CD8-positive, alpha-beta T cell (primary cell): ENCODE measurements at regions of chr15 and their contacts with region 1.

Region 1: DNA sequence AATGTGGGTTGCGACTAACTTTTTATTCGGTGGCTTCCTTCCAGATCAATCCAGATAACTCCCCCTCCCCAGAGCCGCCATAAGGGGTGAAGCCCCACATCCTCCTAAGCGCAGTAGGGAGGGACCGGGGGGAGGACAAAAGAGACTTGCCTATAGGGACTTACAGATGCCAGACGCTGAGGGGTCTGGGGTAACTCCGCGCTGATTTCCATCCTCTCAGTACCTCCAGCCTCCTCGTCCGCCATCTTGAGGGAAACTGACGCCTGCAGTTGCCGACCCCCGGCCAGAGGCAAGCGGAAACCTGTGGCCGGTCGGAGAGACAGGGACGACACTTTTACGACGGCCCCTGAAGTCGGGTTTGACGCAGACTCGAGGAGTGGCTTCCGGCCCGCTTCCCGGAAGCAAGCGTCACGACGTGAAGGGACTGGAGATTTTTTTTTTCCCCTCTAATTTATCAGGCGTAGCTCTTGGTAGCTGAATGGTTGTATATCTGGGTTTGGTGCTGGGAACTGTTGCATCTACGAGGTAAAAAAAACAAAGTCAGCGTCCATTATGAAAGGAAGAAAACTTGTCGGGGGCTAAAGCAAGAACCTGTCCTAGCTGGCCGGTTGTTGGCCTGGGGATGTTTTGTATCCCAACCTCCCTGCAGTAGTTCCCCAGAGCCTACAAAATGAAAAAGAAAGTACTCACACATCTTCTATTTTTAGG is at the start of gene UBR1:
- DNase-seq: peak; percentile 71 to 97 (median 88)
- ATAC-seq: peak; percentile 84
- H3K4me3 ChIP-seq: peak within 1 kb of the TSS; percentile 72 to 86
- H3K4me3 Mint-ChIP-seq: peak within 1 kb of the TSS; percentile 89
- H3K27ac ChIP-seq: peak within 1 kb of the TSS; percentile 87 to 96
- H3K27ac Mint-ChIP-seq: peak within 1 kb of the TSS; percentile 99
- H3K4me1 ChIP-seq: peaks cover 24% of the 10 kb centered on the region
- H3K4me1 Mint-ChIP-seq: peaks cover 48% of the 10 kb centered on the region
- H3K27me3 ChIP-seq: no peaks in the 10 kb centered on the region
- H3K27me3 Mint-ChIP-seq: no peaks in the 10 kb centered on the region
- CTCF ChIP-seq: no peak
- total RNA-seq, gene UBR1: 53.4 to 54.3 TPM

Region 2: DNA sequence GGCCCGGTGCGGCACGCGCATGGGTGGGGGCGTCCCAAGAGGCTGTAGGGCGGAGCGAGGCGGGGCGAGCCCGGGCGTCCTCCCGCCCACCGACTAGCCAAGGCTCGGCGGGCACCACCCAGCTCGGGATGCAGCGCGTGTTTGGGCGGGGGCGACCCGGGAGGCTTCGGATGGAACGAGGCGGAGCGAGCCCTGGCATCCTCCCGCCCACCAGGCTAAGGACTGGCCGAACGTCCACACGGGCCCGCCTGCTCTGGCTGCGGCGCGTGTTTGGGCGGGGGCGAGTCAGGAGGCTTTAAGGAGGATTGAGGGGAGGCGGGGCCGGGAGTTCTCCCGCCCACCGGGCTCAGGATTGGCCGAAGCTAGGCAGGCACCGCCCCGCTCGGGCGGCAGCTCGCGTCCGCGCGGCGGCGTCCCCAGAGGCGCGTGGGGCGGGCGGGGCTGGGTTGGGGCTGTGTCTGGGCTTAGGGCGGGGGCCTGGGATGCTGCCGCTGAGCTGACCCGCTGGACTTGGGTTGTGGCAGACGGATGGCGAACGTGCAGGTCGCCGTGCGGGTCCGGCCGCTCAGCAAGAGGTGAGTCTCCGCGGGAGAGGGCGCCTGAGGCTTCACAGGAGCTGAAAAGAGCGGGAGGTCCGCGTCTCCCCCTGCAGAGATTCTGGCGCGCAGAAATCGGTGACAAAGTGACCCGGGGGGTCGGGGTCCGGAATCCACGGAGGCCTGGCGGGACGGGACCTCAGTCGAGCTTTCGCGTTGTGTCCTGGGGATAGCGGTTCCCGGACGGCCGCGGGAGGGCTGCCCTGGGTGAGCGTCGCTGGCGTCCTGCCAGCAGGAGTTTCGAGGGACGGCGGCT is 530.5 kb before region 1 on chr15 and contains the start of gene STARD9:
- CTCF ChIA-PET with region 1: no interaction called
- POLR2A ChIA-PET with region 1: no interaction called
- intact Hi-C with region 1: loop called in 1 of 2 experiments (anchors 10 kb)
- DNase-seq: peak; percentile 89 to 97 (median 93)
- ATAC-seq: peak; percentile 91
- H3K4me3 ChIP-seq: peak within 1 kb of the TSS; percentile 87 to 89
- H3K4me3 Mint-ChIP-seq: peak within 1 kb of the TSS; percentile 93
- H3K27ac ChIP-seq: peak within 1 kb of the TSS; percentile 41 to 57
- H3K27ac Mint-ChIP-seq: peak within 1 kb of the TSS; percentile 74
- H3K4me1 ChIP-seq: peaks cover 16% of the 10 kb centered on the region
- H3K4me1 Mint-ChIP-seq: peaks cover 27% of the 10 kb centered on the region
- H3K27me3 ChIP-seq: no peaks in the 10 kb centered on the region
- H3K27me3 Mint-ChIP-seq: no peaks in the 10 kb centered on the region
- CTCF ChIP-seq: no peak
- total RNA-seq, gene STARD9: 8.5 to 9.0 TPM

Region 3: DNA sequence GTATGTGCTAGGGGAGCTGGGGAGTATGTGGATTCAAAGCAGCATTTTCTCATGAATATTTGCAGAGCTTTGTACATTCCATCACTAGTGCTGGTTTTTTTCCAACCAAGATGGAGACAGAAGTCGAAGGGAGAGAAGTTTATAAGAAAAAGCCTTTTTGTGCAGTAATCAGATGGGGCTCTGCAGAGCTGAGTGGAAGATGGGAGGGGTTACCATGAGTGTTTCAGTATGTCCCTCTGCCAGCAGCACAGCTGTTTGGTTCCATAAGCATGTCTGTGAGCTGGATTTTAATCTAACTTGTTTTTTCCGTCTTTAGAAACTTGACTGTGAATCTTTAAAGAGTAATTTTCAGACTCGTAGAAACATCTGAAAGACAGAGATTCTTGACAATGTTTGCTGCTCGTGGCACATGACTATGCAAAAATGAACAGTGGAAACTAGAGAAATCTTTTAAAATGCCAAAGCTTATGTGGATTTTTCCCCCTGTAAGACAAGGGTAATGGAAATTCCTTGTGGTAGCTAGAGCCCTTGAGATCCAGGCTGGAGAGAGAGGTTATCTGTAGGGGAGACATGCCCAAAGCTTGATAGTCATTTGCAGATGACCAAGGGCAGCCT is 510.2 kb before region 1 on chr15:
- CTCF ChIA-PET with region 1: no interaction called
- POLR2A ChIA-PET with region 1: no interaction called
- intact Hi-C with region 1: no loop called
- DNase-seq: no peak
- ATAC-seq: no peak
- H3K4me3 ChIP-seq: no peak overlapping the region
- H3K4me3 Mint-ChIP-seq: no peak overlapping the region
- H3K27ac ChIP-seq: no peak overlapping the region
- H3K27ac Mint-ChIP-seq: no peak overlapping the region
- H3K4me1 ChIP-seq: no peaks in the 10 kb centered on the region
- H3K4me1 Mint-ChIP-seq: no peaks in the 10 kb centered on the region
- H3K27me3 ChIP-seq: no peaks in the 10 kb centered on the region
- H3K27me3 Mint-ChIP-seq: no peaks in the 10 kb centered on the region
- CTCF ChIP-seq: no peak

Region 4: GRCh38 chr15:43070893-43071292 is 35.0 kb before region 1 on chr15:
- CTCF ChIA-PET with region 1: no interaction called
- POLR2A ChIA-PET with region 1: no interaction called
- intact Hi-C with region 1: no loop called
- DNase-seq: no peak
- ATAC-seq: no peak
- H3K4me3 ChIP-seq: no peak overlapping the region
- H3K4me3 Mint-ChIP-seq: no peak overlapping the region
- H3K27ac ChIP-seq: no peak overlapping the region
- H3K27ac Mint-ChIP-seq: no peak overlapping the region
- H3K4me1 ChIP-seq: no peaks in the 10 kb centered on the region
- H3K4me1 Mint-ChIP-seq: no peaks in the 10 kb centered on the region
- H3K27me3 ChIP-seq: no peaks in the 10 kb centered on the region
- H3K27me3 Mint-ChIP-seq: no peaks in the 10 kb centered on the region
- CTCF ChIP-seq: no peak

Region 5: GRCh38 chr15:43127752-43128151 is 21.8 kb after region 1 on chr15:
- CTCF ChIA-PET with region 1: no interaction called
- POLR2A ChIA-PET with region 1: interaction called, 9 read pairs
- intact Hi-C with region 1: loop called (anchors 1 kb)
- DNase-seq: no peak
- ATAC-seq: no peak
- H3K4me3 ChIP-seq: no peak overlapping the region
- H3K4me3 Mint-ChIP-seq: no peak overlapping the region
- H3K27ac ChIP-seq: no peak overlapping the region
- H3K27ac Mint-ChIP-seq: no peak overlapping the region
- H3K4me1 ChIP-seq: peaks cover 5% of the 10 kb centered on the region
- H3K4me1 Mint-ChIP-seq: peaks cover 11% of the 10 kb centered on the region
- H3K27me3 ChIP-seq: peaks cover 0 to 2% of the 10 kb centered on the region in 2 experiments
- H3K27me3 Mint-ChIP-seq: no peaks in the 10 kb centered on the region
- CTCF ChIP-seq: no peak

Region 6: GRCh38 chr15:43133430-43134156 is 27.7 kb after region 1 on chr15 and contains the start of gene TMEM62:
- CTCF ChIA-PET with region 1: no interaction called
- POLR2A ChIA-PET with region 1: interaction called, 9 read pairs
- intact Hi-C with region 1: loop called (anchors 1 kb)
- DNase-seq: peak; percentile 20 to 78 (median 60)
- ATAC-seq: peak; percentile 76
- H3K4me3 ChIP-seq: peak within 1 kb of the TSS; percentile 80 to 83
- H3K4me3 Mint-ChIP-seq: peak within 1 kb of the TSS; percentile 94
- H3K27ac ChIP-seq: peak within 1 kb of the TSS; percentile 66 to 87
- H3K27ac Mint-ChIP-seq: peak within 1 kb of the TSS; percentile 86
- H3K4me1 ChIP-seq: peaks cover 9% of the 10 kb centered on the region
- H3K4me1 Mint-ChIP-seq: peaks cover 21% of the 10 kb centered on the region
- H3K27me3 ChIP-seq: no peaks in the 10 kb centered on the region
- H3K27me3 Mint-ChIP-seq: no peaks in the 10 kb centered on the region
- CTCF ChIP-seq: no peak
- total RNA-seq, gene TMEM62: 23.0 to 25.5 TPM

Region 7: DNA sequence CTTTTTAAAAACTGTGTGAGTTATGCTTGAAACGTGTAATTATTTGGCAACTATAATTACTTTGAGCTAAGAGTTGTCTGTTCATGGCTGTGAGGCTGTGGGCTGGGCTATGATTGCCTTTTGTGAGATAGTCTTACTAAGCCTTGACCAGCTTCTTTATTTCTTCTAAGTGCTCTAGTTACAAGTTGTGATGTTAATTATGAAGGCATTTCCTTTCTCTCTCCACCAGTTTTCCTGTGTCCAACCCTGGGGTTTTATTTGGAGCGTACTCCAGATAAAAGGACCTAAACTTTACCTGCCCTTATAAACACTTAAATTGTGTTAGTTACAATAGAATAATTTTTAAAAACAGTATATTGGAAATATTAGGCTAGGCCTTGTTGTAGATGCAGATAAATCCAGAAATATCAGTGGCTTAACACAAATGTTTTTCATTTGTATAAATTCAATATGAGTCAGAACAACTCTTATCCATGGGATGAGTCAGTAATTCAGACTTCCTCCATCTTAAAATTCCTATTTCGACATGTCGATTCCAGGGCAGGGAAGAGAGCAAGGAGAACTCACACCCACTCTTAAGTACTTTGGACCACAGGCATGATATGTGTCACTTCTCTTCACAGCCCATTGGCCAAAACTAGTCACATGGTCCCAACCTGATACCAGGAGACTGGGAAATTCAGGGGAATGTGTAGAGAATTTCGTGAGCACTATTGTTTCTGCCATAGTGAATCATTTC is 44.4 kb after region 1 on chr15:
- CTCF ChIA-PET with region 1: no interaction called
- POLR2A ChIA-PET with region 1: interaction called, 4 read pairs
- intact Hi-C with region 1: loop called in 1 of 2 experiments (anchors 5 kb)
- DNase-seq: no peak
- ATAC-seq: no peak
- H3K4me3 ChIP-seq: no peak overlapping the region
- H3K4me3 Mint-ChIP-seq: no peak overlapping the region
- H3K27ac ChIP-seq: no peak overlapping the region
- H3K27ac Mint-ChIP-seq: no peak overlapping the region
- H3K4me1 ChIP-seq: peaks cover 14% of the 10 kb centered on the region
- H3K4me1 Mint-ChIP-seq: peaks cover 9% of the 10 kb centered on the region
- H3K27me3 ChIP-seq: no peaks in the 10 kb centered on the region
- H3K27me3 Mint-ChIP-seq: no peaks in the 10 kb centered on the region
- CTCF ChIP-seq: no peak

Region 8: DNA sequence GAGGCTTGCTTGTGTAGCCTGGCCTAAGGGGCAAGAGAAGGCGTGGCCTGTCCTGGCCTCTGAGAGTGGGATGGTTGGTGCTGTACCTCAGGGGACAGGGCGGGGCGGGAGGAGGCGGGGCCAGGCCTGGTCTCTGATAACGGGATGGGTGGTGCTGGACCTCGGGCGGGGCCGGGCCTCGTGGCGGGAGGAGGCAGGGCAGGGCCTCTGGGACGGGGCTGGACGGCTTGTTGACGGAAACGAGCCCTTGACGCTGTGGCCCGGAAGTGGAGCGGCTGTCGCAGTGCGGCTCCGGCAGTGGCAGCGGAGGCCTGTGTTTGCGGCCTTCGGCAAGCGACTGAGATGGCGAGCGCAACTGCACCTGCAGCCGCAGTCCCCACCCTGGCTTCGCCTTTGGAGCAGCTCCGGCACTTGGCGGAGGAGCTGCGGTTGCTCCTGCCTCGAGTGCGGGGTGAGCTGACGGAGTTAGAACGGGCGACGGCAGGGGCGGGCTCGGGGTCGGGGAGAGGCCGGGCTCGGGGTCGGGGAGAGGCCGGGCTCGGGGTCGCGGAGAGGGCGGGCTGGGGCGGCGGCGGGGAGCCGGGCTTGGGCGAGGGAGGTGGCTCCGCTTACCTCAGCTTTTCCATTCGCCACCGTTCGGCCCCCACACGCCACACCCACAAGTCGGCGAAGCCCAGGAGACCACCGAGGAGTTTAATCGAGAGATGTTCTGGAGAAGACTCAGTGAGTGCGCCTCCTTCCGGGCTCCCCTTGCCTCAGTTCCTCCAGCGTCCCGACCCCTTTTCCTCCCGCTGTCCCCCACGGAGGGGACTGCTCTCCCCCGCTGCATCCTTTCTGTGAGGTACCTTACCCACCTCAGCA is 79.5 kb after region 1 on chr15 and contains the start of gene CCNDBP1:
- CTCF ChIA-PET with region 1: interaction called, 3 read pairs
- POLR2A ChIA-PET with region 1: interaction called, 5 read pairs
- intact Hi-C with region 1: loop called (anchors 1 kb)
- DNase-seq: peak; percentile 73 to 93 (median 86)
- ATAC-seq: peak; percentile 75
- H3K4me3 ChIP-seq: peak within 1 kb of the TSS; percentile 82 to 97
- H3K4me3 Mint-ChIP-seq: peak within 1 kb of the TSS; percentile 97
- H3K27ac ChIP-seq: peak within 1 kb of the TSS; percentile 87 to 91
- H3K27ac Mint-ChIP-seq: peak within 1 kb of the TSS; percentile 98
- H3K4me1 ChIP-seq: peaks cover 18% of the 10 kb centered on the region
- H3K4me1 Mint-ChIP-seq: peaks cover 43% of the 10 kb centered on the region
- H3K27me3 ChIP-seq: no peaks in the 10 kb centered on the region
- H3K27me3 Mint-ChIP-seq: no peaks in the 10 kb centered on the region
- CTCF ChIP-seq: peak; percentile 56
- total RNA-seq, gene CCNDBP1: 80.3 to 81.1 TPM

Region 9: GRCh38 chr15:43329960-43330779 is 224.2 kb after region 1 on chr15 and contains the start of gene LCMT2:
- CTCF ChIA-PET with region 1: no interaction called
- POLR2A ChIA-PET with region 1: no interaction called
- intact Hi-C with region 1: loop called in 1 of 2 experiments (anchors 2 kb)
- DNase-seq: peak; percentile 80 to 98 (median 91)
- ATAC-seq: peak; percentile 85
- H3K4me3 ChIP-seq: peak within 1 kb of the TSS; percentile 74 to 84
- H3K4me3 Mint-ChIP-seq: peak within 1 kb of the TSS; percentile 98
- H3K27ac ChIP-seq: peak within 1 kb of the TSS; percentile 89 to 96
- H3K27ac Mint-ChIP-seq: peak within 1 kb of the TSS; percentile 100
- H3K4me1 ChIP-seq: peaks cover 23% of the 10 kb centered on the region
- H3K4me1 Mint-ChIP-seq: peaks cover 42% of the 10 kb centered on the region
- H3K27me3 ChIP-seq: no peaks in the 10 kb centered on the region
- H3K27me3 Mint-ChIP-seq: no peaks in the 10 kb centered on the region
- CTCF ChIP-seq: no peak
- total RNA-seq, gene LCMT2: 7.0 to 7.6 TPM

Region 10: GRCh38 chr15:43881944-43882343 is 776.0 kb after region 1 on chr15:
- CTCF ChIA-PET with region 1: no interaction called
- POLR2A ChIA-PET with region 1: no interaction called
- intact Hi-C with region 1: no loop called
- DNase-seq: no peak
- ATAC-seq: no peak
- H3K4me3 ChIP-seq: no peak overlapping the region
- H3K4me3 Mint-ChIP-seq: no peak overlapping the region
- H3K27ac ChIP-seq: no peak overlapping the region
- H3K27ac Mint-ChIP-seq: no peak overlapping the region
- H3K4me1 ChIP-seq: no peaks in the 10 kb centered on the region
- H3K4me1 Mint-ChIP-seq: no peaks in the 10 kb centered on the region
- H3K27me3 ChIP-seq: no peaks in the 10 kb centered on the region
- H3K27me3 Mint-ChIP-seq: no peaks in the 10 kb centered on the region
- CTCF ChIP-seq: no peak